CD4-positive, alpha-beta memory T cell (primary cell): ENCODE measurements at regions of chr7 and their contacts with region 1.

Region 1: GRCh38 chr7:131107337-131108211 is 220.1 kb upstream of the MKLN1 start:
- DNase-seq: peak; percentile 84 to 91 (median 88)
- H3K4me3 ChIP-seq: peak overlapping the region; percentile 26 to 98
- H3K4me3 Mint-ChIP-seq: peak overlapping the region; percentile 84 to 99 (median 98)
- H3K27ac ChIP-seq: peak overlapping the region; percentile 99
- H3K27ac Mint-ChIP-seq: peak overlapping the region; percentile 95 to 100 (median 99)
- H3K4me1 ChIP-seq: peaks cover 61% of the 10 kb centered on the region
- H3K4me1 Mint-ChIP-seq: peaks cover 47 to 84% (median 57%) of the 10 kb centered on the region in 4 donors
- H3K27me3 ChIP-seq: no peaks in the 10 kb centered on the region
- H3K27me3 Mint-ChIP-seq: peaks cover 0 to 1% of the 10 kb centered on the region in 2 donors

Region 2: GRCh38 chr7:130961128-130961601 is 146.4 kb before region 1 on chr7:
- CTCF ChIA-PET with region 1: interaction called, 3 read pairs
- POLR2A ChIA-PET with region 1: interaction called, 4 read pairs
- intact Hi-C with region 1: loop called (anchors 5 kb)
- DNase-seq: peak; percentile 83 to 94 (median 90)
- H3K4me3 ChIP-seq: peak overlapping the region; percentile 27 to 60
- H3K4me3 Mint-ChIP-seq: peak overlapping the region; percentile 88 to 97 (median 94)
- H3K27ac ChIP-seq: peak overlapping the region; percentile 93
- H3K27ac Mint-ChIP-seq: peak overlapping the region in 6 of 7 donors; percentile 96 to 100 (median 99)
- H3K4me1 ChIP-seq: peaks cover 71% of the 10 kb centered on the region
- H3K4me1 Mint-ChIP-seq: peaks cover 26 to 75% (median 47%) of the 10 kb centered on the region in 4 donors
- H3K27me3 ChIP-seq: no peaks in the 10 kb centered on the region
- H3K27me3 Mint-ChIP-seq: no peaks in the 10 kb centered on the region

Region 3: GRCh38 chr7:131057015-131057793 is 50.4 kb before region 1 on chr7:
- CTCF ChIA-PET with region 1: interaction called, 6 read pairs
- POLR2A ChIA-PET with region 1: interaction called, 16 read pairs
- intact Hi-C with region 1: loop called (anchors 10 kb)
- DNase-seq: peak; percentile 58 to 79 (median 70)
- H3K4me3 ChIP-seq: no peak overlapping the region
- H3K4me3 Mint-ChIP-seq: peak overlapping the region; percentile 49 to 93 (median 81)
- H3K27ac ChIP-seq: peak overlapping the region; percentile 64
- H3K27ac Mint-ChIP-seq: peak overlapping the region; percentile 92 to 100 (median 97)
- H3K4me1 ChIP-seq: peaks cover 95% of the 10 kb centered on the region
- H3K4me1 Mint-ChIP-seq: peaks cover 53 to 87% (median 68%) of the 10 kb centered on the region in 4 donors
- H3K27me3 ChIP-seq: no peaks in the 10 kb centered on the region
- H3K27me3 Mint-ChIP-seq: no peaks in the 10 kb centered on the region

Region 4: GRCh38 chr7:131087756-131088658 is 19.6 kb before region 1 on chr7:
- CTCF ChIA-PET with region 1: interaction called, 4 read pairs
- POLR2A ChIA-PET with region 1: interaction called, 13 read pairs
- intact Hi-C with region 1: no loop called
- DNase-seq: no peak
- H3K4me3 ChIP-seq: no peak overlapping the region
- H3K4me3 Mint-ChIP-seq: peak overlapping the region in 6 of 8 donors; percentile 1 to 75 (median 54)
- H3K27ac ChIP-seq: no peak overlapping the region
- H3K27ac Mint-ChIP-seq: peak overlapping the region in 5 of 7 donors; percentile 26 to 76 (median 37)
- H3K4me1 ChIP-seq: peaks cover 76% of the 10 kb centered on the region
- H3K4me1 Mint-ChIP-seq: peaks cover 61 to 94% (median 77%) of the 10 kb centered on the region in 4 donors
- H3K27me3 ChIP-seq: no peaks in the 10 kb centered on the region
- H3K27me3 Mint-ChIP-seq: no peaks in the 10 kb centered on the region

Region 5: GRCh38 chr7:131151034-131151433 is 43.5 kb after region 1 on chr7:
- CTCF ChIA-PET with region 1: interaction called, 3 read pairs
- POLR2A ChIA-PET with region 1: interaction called, 4 read pairs
- intact Hi-C with region 1: loop called (anchors 5 kb)
- DNase-seq: no peak
- H3K4me3 ChIP-seq: no peak overlapping the region
- H3K4me3 Mint-ChIP-seq: no peak overlapping the region
- H3K27ac ChIP-seq: no peak overlapping the region
- H3K27ac Mint-ChIP-seq: no peak overlapping the region
- H3K4me1 ChIP-seq: no peaks in the 10 kb centered on the region
- H3K4me1 Mint-ChIP-seq: peaks cover 0 to 3% (median 1%) of the 10 kb centered on the region in 4 donors
- H3K27me3 ChIP-seq: no peaks in the 10 kb centered on the region
- H3K27me3 Mint-ChIP-seq: peaks cover 0 to 1% of the 10 kb centered on the region in 2 donors

Region 6: GRCh38 chr7:131231381-131232220 is 124.0 kb after region 1 on chr7:
- CTCF ChIA-PET with region 1: interaction called, 6 read pairs
- POLR2A ChIA-PET with region 1: interaction called, 145 read pairs
- intact Hi-C with region 1: loop called (anchors 1 kb)
- DNase-seq: peak; percentile 80 to 90 (median 82)
- H3K4me3 ChIP-seq: peak overlapping the region; percentile 25 to 31
- H3K4me3 Mint-ChIP-seq: peak overlapping the region; percentile 62 to 86 (median 80)
- H3K27ac ChIP-seq: peak overlapping the region; percentile 60
- H3K27ac Mint-ChIP-seq: peak overlapping the region; percentile 85 to 94 (median 92)
- H3K4me1 ChIP-seq: peaks cover 41% of the 10 kb centered on the region
- H3K4me1 Mint-ChIP-seq: peaks cover 20 to 46% (median 33%) of the 10 kb centered on the region in 4 donors
- H3K27me3 ChIP-seq: no peaks in the 10 kb centered on the region
- H3K27me3 Mint-ChIP-seq: no peaks in the 10 kb centered on the region

Region 7: DNA sequence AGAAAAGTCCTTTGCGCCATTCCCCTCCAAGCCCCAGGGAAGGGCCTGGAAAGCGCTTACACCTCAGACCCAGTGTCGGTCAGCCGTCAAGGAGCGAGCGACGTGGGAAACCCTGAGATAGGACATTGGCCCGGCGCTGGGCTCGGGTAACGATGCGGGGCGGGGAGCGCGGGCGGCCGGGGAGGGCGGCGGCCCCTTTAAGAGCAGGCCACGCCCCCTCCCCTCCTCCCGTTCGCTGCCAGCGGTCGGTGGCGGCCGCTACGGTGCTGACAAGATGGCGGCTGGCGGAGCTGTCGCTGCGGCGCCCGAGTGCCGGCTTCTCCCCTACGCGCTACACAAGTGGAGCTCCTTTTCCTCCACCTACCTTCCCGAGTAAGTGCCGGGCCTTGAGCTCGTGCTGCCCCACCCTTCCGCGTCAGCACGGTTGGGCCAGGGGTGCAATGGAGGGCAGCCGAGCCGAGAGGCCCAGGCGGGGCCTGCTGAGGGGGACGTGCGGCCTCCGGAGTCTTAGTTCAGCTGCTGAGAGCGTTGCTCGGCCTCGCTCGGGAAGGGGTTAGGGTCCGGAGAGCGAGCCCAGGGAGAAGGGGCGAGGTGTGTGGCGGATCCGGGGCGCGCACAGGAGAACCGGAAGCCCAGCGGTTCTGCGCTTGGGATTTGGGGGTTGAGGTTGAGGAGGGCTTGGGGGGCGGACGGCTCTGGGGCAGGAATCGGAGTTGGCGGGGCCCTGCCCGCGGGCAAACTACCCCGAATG is 220.2 kb after region 1 on chr7 and contains the start of gene MKLN1:
- CTCF ChIA-PET with region 1: interaction called, 5 read pairs
- POLR2A ChIA-PET with region 1: interaction called, 84 read pairs
- intact Hi-C with region 1: loop called (anchors 1 kb)
- DNase-seq: peak; percentile 85 to 88 (median 88)
- H3K4me3 ChIP-seq: peak within 1 kb of the TSS; percentile 57 to 93
- H3K4me3 Mint-ChIP-seq: peak within 1 kb of the TSS; percentile 90 to 99 (median 96)
- H3K27ac ChIP-seq: peak within 1 kb of the TSS; percentile 95
- H3K27ac Mint-ChIP-seq: peak within 1 kb of the TSS; percentile 94 to 99 (median 96)
- H3K4me1 ChIP-seq: peaks cover 63% of the 10 kb centered on the region
- H3K4me1 Mint-ChIP-seq: peaks cover 48 to 86% (median 63%) of the 10 kb centered on the region in 4 donors
- H3K27me3 ChIP-seq: no peaks in the 10 kb centered on the region
- H3K27me3 Mint-ChIP-seq: no peaks in the 10 kb centered on the region
- total RNA-seq, gene MKLN1: 60.7 to 61.0 TPM

Region 8: GRCh38 chr7:131574741-131575140 is 467.2 kb after region 1 on chr7:
- CTCF ChIA-PET with region 1: no interaction called
- POLR2A ChIA-PET with region 1: no interaction called
- intact Hi-C with region 1: no loop called
- DNase-seq: no peak
- H3K4me3 ChIP-seq: no peak overlapping the region
- H3K4me3 Mint-ChIP-seq: no peak overlapping the region
- H3K27ac ChIP-seq: no peak overlapping the region
- H3K27ac Mint-ChIP-seq: no peak overlapping the region
- H3K4me1 ChIP-seq: no peaks in the 10 kb centered on the region
- H3K4me1 Mint-ChIP-seq: peaks cover 0 to 1% (median 0%) of the 10 kb centered on the region in 4 donors
- H3K27me3 ChIP-seq: no peaks in the 10 kb centered on the region
- H3K27me3 Mint-ChIP-seq: peaks cover 0 to 4% of the 10 kb centered on the region in 2 donors